Gastrocnemius medialis (tissue), 4 donors: ENCODE measurements at regions of chr1 and their contacts with region 1.

Region 1: GRCh38 chr1:85276215-85276977 is at the start of gene BCL10:
- DNase-seq: peak; percentile 97 to 98
- ATAC-seq: peak; percentile 84 to 87
- H3K4me3 ChIP-seq: peak within 1 kb of the TSS; percentile 83 to 99 (median 93)
- H3K27ac ChIP-seq: peak within 1 kb of the TSS; percentile 96 to 99 (median 98)
- H3K4me1 ChIP-seq: peaks cover 23 to 27% of the 10 kb centered on the region in 2 donors
- H3K27me3 ChIP-seq: no peaks in the 10 kb centered on the region
- CTCF ChIP-seq: no peak
- POLR2A ChIP-seq: peak; percentile 91 to 92
- total RNA-seq, gene BCL10: 4.3 to 6.4 (median 5.4) TPM

Region 2: DNA sequence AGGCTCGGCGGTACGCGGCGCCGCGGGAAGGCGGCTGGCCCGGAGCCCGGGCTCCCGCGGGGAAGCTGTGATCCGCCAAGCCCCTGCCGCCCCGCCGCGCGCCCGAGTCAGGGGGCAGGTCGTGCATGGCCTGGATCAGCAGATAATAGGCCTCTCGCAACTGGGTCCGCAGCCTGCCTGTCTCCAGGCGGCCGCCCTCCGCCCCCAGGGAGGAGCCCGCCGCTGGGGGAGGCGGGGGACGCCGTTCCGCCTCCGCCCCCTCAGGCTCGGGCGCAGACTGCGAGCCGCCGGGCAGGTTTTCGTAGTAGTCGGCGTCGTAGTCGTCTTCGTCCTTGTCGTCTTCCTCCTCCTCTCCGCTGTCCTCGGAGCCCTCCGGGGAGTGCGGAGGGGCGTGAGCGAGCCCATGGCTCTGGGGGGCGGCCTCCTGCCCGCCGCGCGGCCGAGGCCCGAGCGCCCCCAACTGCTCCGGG is 75.5 kb before region 1 on chr1 and contains the start of gene SYDE2:
- in situ Hi-C with region 1: no loop called
- intact Hi-C with region 1: loop called (anchors 5 kb)
- DNase-seq: peak; percentile 38 to 60
- ATAC-seq: peak; percentile 77 to 79
- H3K4me3 ChIP-seq: peak within 1 kb of the TSS; percentile 76 to 96 (median 78)
- H3K27ac ChIP-seq: peak within 1 kb of the TSS; percentile 86 to 95 (median 94)
- H3K4me1 ChIP-seq: peaks cover 11 to 17% of the 10 kb centered on the region in 2 donors
- H3K27me3 ChIP-seq: no peaks in the 10 kb centered on the region
- CTCF ChIP-seq: no peak
- POLR2A ChIP-seq: peak; percentile 41 to 60
- total RNA-seq, gene SYDE2: 3.8 to 7.2 (median 4.9) TPM